Dorsolateral prefrontal cortex (tissue), 120 donors: ENCODE measurements at regions of chr5 and their contacts with region 1.

Region 1: GRCh38 chr5:178732281-178732680 is 1.8 kb upstream of the ZNF354A start:
- DNase-seq: no peak
- H3K4me3 ChIP-seq: no peak overlapping the region
- H3K27ac ChIP-seq: peak overlapping the region in 22 of 59 donors; percentile 1 to 59 (median 36)
- H3K27me3 ChIP-seq: no peaks in the 10 kb centered on the region
- CTCF ChIP-seq: no peak

Region 2: DNA sequence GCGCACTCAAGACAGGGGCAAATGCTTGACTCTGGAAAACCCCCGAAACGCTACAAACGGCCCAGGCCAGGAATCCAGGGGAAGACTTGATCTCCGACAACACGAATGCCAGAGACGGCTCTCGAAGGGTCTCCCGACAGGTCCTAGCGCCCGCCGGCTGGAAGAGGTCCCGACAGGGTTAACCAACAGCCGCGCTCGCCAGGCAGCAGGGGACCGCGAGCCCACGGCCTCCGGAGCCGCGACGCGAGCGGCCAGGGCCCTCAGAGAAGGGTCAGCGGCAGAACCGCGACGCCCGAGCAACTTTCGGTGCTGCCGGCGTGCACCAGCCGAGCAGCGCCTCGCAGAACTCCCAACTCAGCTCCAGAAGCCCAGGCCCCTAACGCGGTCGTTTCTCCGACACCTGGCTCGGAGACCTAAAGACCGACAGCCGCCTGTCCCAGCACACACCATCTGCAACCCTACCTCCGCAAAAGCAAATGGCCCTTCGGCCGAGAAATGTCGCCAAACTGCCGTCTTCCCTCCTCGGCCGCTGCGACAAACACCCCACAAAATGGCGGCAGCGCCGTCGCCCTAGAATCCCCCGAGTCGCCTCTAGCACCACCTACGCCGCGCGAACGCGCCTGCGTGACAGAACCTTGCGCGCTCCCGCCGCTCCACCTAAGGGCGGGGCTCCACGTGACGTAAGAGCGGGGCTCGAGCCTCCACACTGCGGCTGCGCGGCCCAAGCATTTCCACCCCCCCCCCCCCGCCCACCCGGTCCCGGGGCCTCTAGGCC is 105.6 kb before region 1 on chr5 and contains the start of gene CLK4:
- intact Hi-C with region 1: loop called (anchors 5 kb)
- DNase-seq: peak; percentile 86 to 97 (median 95)
- H3K4me3 ChIP-seq: peak within 1 kb of the TSS; percentile 58 to 99 (median 92)
- H3K27ac ChIP-seq: peak within 1 kb of the TSS; percentile 58 to 99 (median 95)
- H3K27me3 ChIP-seq: no peaks in the 10 kb centered on the region
- CTCF ChIP-seq: peak in 11 of 56 donors; percentile 4 to 43 (median 19)
- total RNA-seq, gene CLK4: 39.0 to 95.3 (median 58.1) TPM

Region 3: GRCh38 chr5:178859625-178860531 is 127.6 kb after region 1 on chr5 and contains the start of gene ZNF354B:
- intact Hi-C with region 1: loop called (anchors 2 kb)
- DNase-seq: peak; percentile 77 to 95 (median 92)
- H3K4me3 ChIP-seq: peak within 1 kb of the TSS; percentile 56 to 95 (median 83)
- H3K27ac ChIP-seq: peak within 1 kb of the TSS in 57 of 59 donors; percentile 6 to 91 (median 78)
- H3K27me3 ChIP-seq: no peaks in the 10 kb centered on the region
- CTCF ChIP-seq: peak in 47 of 56 donors; percentile 14 to 66 (median 45)
- total RNA-seq, gene ZNF354B: 13.5 to 33.5 (median 21.8) TPM

Region 4: GRCh38 chr5:179060116-179061008 is 328.1 kb after region 1 on chr5 and contains the start of gene ZNF354C:
- intact Hi-C with region 1: loop called (anchors 2 kb)
- DNase-seq: peak; percentile 78 to 94 (median 85)
- H3K4me3 ChIP-seq: peak within 1 kb of the TSS; percentile 47 to 97 (median 79)
- H3K27ac ChIP-seq: peak within 1 kb of the TSS in 58 of 59 donors; percentile 7 to 87 (median 74)
- H3K27me3 ChIP-seq: peaks cover 0 to 7% (median 0%) of the 10 kb centered on the region in 45 donors
- CTCF ChIP-seq: peak in 36 of 56 donors; percentile 7 to 60 (median 28)
- total RNA-seq, gene ZNF354C: 4.6 to 10.9 (median 7.7) TPM

Region 5: GRCh38 chr5:179154991-179155955 is 423.0 kb after region 1 on chr5:
- intact Hi-C with region 1: no loop called
- DNase-seq: peak in 5 of 10 donors; percentile 18 to 38 (median 22)
- H3K4me3 ChIP-seq: no peak overlapping the region
- H3K27ac ChIP-seq: no peak overlapping the region
- H3K27me3 ChIP-seq: no peaks in the 10 kb centered on the region
- CTCF ChIP-seq: no peak